Endothelial cell of umbilical vein (primary cell): ENCODE measurements at regions of chr5 and their contacts with region 1.

Region 1: GRCh38 chr5:83718195-83718825 is 2.3 kb downstream of the HAPLN1 start:
- DNase-seq: peak; percentile 70
- H3K4me3 ChIP-seq: no peak overlapping the region
- H3K27ac ChIP-seq: no peak overlapping the region
- H3K4me1 ChIP-seq: peaks cover 4% of the 10 kb centered on the region
- H3K27me3 ChIP-seq: peaks cover 8% of the 10 kb centered on the region in 2 experiments
- CTCF ChIP-seq: peak; percentile 67 to 74
- POLR2A ChIP-seq: no peak

Region 2: DNA sequence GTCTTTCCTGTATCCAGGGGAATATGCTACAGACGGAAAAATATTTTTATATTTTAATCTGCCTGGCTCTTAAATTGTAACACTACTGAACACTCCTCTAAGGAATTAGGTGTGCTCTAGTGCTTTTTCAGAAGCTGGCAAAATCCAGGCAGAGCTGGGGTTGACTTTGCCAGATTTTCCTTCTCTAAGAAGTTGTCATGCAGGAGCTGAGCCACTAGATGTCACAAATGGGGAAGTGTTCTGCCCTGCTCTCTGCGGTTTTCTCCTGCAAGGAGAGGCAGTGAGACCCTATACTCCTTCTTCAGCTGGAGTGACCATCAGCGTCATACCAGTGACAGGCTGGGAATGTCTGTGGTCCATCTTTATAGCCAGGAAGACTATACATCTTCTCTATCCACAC is 110.2 kb before region 1 on chr5:
- CTCF ChIA-PET with region 1: interaction called, 32 read pairs
- POLR2A ChIA-PET with region 1: no interaction called
- dilution Hi-C with region 1: no loop called
- intact Hi-C with region 1: loop called (anchors 5 kb)
- DNase-seq: peak; percentile 55
- H3K4me3 ChIP-seq: no peak overlapping the region
- H3K27ac ChIP-seq: no peak overlapping the region
- H3K4me1 ChIP-seq: no peaks in the 10 kb centered on the region
- H3K27me3 ChIP-seq: no peaks in the 10 kb centered on the region
- CTCF ChIP-seq: peak; percentile 26 to 70
- POLR2A ChIP-seq: no peak

Region 3: GRCh38 chr5:83947763-83948162 is 229.5 kb after region 1 on chr5:
- CTCF ChIA-PET with region 1: no interaction called
- POLR2A ChIA-PET with region 1: no interaction called
- dilution Hi-C with region 1: no loop called
- intact Hi-C with region 1: no loop called
- DNase-seq: no peak
- H3K4me3 ChIP-seq: no peak overlapping the region
- H3K27ac ChIP-seq: no peak overlapping the region
- H3K4me1 ChIP-seq: no peaks in the 10 kb centered on the region
- H3K27me3 ChIP-seq: no peaks in the 10 kb centered on the region
- CTCF ChIP-seq: no peak
- POLR2A ChIP-seq: no peak

Region 4: GRCh38 chr5:84088995-84089394 is 370.7 kb after region 1 on chr5:
- CTCF ChIA-PET with region 1: no interaction called
- POLR2A ChIA-PET with region 1: no interaction called
- dilution Hi-C with region 1: no loop called
- intact Hi-C with region 1: loop called (anchors 5 kb)
- DNase-seq: peak; percentile 16
- H3K4me3 ChIP-seq: no peak overlapping the region
- H3K27ac ChIP-seq: no peak overlapping the region
- H3K4me1 ChIP-seq: no peaks in the 10 kb centered on the region
- H3K27me3 ChIP-seq: no peaks in the 10 kb centered on the region
- CTCF ChIP-seq: peak; percentile 6 to 25
- POLR2A ChIP-seq: no peak

Region 5: DNA sequence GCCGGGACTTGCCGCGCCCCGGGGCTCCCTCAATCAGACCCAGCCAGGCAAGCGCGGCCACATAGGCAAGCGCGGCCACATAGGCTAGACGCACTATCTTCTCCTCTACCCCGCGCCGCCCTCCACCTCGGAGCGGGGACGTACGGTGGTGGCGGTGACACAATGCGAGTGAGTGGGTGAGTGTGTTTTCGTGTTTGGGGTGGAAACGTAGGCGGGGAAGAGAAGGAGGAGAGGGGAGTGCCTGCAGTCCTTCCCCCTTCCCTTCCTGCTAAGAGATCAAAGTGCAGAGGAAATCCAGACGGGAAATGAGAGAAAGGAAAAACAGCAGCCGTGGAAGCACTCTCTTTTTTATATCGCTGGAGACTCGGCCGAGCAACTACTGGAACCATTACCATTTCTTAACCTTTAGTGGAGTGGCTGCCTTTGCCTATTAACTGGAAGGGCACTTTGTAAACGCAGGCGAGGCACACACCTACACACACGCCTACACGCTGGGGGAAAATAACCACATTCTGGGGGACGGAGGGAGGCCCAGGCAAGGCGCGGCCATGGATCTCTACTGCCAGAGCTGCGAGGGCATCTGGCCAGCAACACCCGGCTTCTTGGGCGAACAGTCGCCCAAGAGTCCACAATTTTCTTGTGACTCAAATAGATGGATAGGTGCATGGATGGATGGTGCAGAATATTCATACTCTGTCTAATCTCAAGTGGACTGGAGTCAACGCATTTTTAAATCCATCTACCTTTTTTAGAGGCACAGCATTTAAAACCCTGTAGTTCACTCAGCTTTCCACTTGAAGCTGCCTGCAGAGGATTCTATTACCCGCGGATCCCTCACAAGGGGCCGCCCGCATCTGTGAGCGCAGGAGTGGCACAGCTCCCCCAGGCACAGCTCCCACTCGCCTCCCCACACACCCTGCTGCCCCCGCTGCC is 664.3 kb after region 1 on chr5:
- CTCF ChIA-PET with region 1: interaction called, 5 read pairs
- POLR2A ChIA-PET with region 1: no interaction called
- dilution Hi-C with region 1: no loop called
- intact Hi-C with region 1: loop called (anchors 1 kb)
- DNase-seq: peak; percentile 66
- H3K4me3 ChIP-seq: peak overlapping the region; percentile 22 to 65 (median 51)
- H3K27ac ChIP-seq: peak overlapping the region; percentile 22
- H3K4me1 ChIP-seq: peaks cover 19% of the 10 kb centered on the region
- H3K27me3 ChIP-seq: no peaks in the 10 kb centered on the region
- CTCF ChIP-seq: no peak
- POLR2A ChIP-seq: peak; percentile 54

Region 6: GRCh38 chr5:85049020-85049419 is 1330.7 kb after region 1 on chr5:
- CTCF ChIA-PET with region 1: interaction called, 29 read pairs
- POLR2A ChIA-PET with region 1: no interaction called
- dilution Hi-C with region 1: no loop called
- intact Hi-C with region 1: loop called (anchors 1 kb)
- DNase-seq: peak; percentile 18
- H3K4me3 ChIP-seq: no peak overlapping the region
- H3K27ac ChIP-seq: no peak overlapping the region
- H3K4me1 ChIP-seq: no peaks in the 10 kb centered on the region
- H3K27me3 ChIP-seq: no peaks in the 10 kb centered on the region
- CTCF ChIP-seq: peak; percentile 5 to 20
- POLR2A ChIP-seq: no peak